ENCODE measurements at regions of chr3 and their contacts with region 1.

Region 1: GRCh38 chr3:169149349-169149890 is 514.1 kb downstream of the MECOM start:
- DNase-seq: peak; percentile 84
- H3K4me3 ChIP-seq: no peak overlapping the region
- H3K27ac ChIP-seq: peak overlapping the region in 1 of 4 donors; percentile 52
- H3K4me1 ChIP-seq: peaks cover 0 to 27% (median 25%) of the 10 kb centered on the region in 4 donors
- H3K27me3 ChIP-seq: peaks cover 25 to 63% (median 46%) of the 10 kb centered on the region in 3 donors
- CTCF ChIP-seq: peak; percentile 43 to 90 (median 80)
- EP300 ChIP-seq: no peak
- POLR2A ChIP-seq: no peak

Region 2: GRCh38 chr3:168952551-168952950 is 196.9 kb before region 1 on chr3:
- intact Hi-C with region 1: loop called (anchors 10 kb)
- DNase-seq: no peak
- H3K4me3 ChIP-seq: peak overlapping the region in 1 of 4 donors; percentile 24
- H3K27ac ChIP-seq: no peak overlapping the region
- H3K4me1 ChIP-seq: peaks cover 0 to 22% (median 7%) of the 10 kb centered on the region in 4 donors
- H3K27me3 ChIP-seq: no peaks in the 10 kb centered on the region
- CTCF ChIP-seq: peak in 1 of 4 experiments; percentile 25
- EP300 ChIP-seq: no peak
- POLR2A ChIP-seq: no peak

Region 3: GRCh38 chr3:169112153-169112892 is 37.1 kb before region 1 on chr3:
- intact Hi-C with region 1: no loop called
- DNase-seq: no peak
- H3K4me3 ChIP-seq: no peak overlapping the region
- H3K27ac ChIP-seq: peak overlapping the region in 1 of 4 donors; percentile 20
- H3K4me1 ChIP-seq: no peaks in the 10 kb centered on the region
- H3K27me3 ChIP-seq: no peaks in the 10 kb centered on the region
- CTCF ChIP-seq: no peak
- EP300 ChIP-seq: no peak
- POLR2A ChIP-seq: no peak

Region 4: GRCh38 chr3:169342652-169343505 is 193.5 kb after region 1 on chr3:
- intact Hi-C with region 1: loop called (anchors 5 kb)
- DNase-seq: no peak
- H3K4me3 ChIP-seq: no peak overlapping the region
- H3K27ac ChIP-seq: no peak overlapping the region
- H3K4me1 ChIP-seq: no peaks in the 10 kb centered on the region
- H3K27me3 ChIP-seq: no peaks in the 10 kb centered on the region
- CTCF ChIP-seq: no peak
- EP300 ChIP-seq: no peak
- POLR2A ChIP-seq: no peak

Region 5: GRCh38 chr3:169662132-169662842 is 512.9 kb after region 1 on chr3:
- intact Hi-C with region 1: loop called (anchors 2 kb)
- DNase-seq: no peak
- H3K4me3 ChIP-seq: peak overlapping the region; percentile 23 to 63 (median 55)
- H3K27ac ChIP-seq: peak overlapping the region; percentile 43 to 82 (median 59)
- H3K4me1 ChIP-seq: peaks cover 0 to 38% (median 38%) of the 10 kb centered on the region in 4 donors
- H3K27me3 ChIP-seq: peaks cover 91 to 100% (median 96%) of the 10 kb centered on the region in 3 donors
- CTCF ChIP-seq: peak in 2 of 4 experiments; percentile 34 to 65
- EP300 ChIP-seq: no peak
- POLR2A ChIP-seq: no peak

Region 6: GRCh38 chr3:169668957-169669681 is 519.7 kb after region 1 on chr3:
- intact Hi-C with region 1: loop called (anchors 2 kb)
- DNase-seq: peak; percentile 70
- H3K4me3 ChIP-seq: peak overlapping the region in 3 of 4 donors; percentile 25 to 35 (median 30)
- H3K27ac ChIP-seq: peak overlapping the region in 1 of 4 donors; percentile 46
- H3K4me1 ChIP-seq: peaks cover 0 to 20% (median 17%) of the 10 kb centered on the region in 4 donors
- H3K27me3 ChIP-seq: peaks cover 47 to 98% (median 73%) of the 10 kb centered on the region in 3 donors
- CTCF ChIP-seq: peak; percentile 39 to 66 (median 53)
- EP300 ChIP-seq: no peak
- POLR2A ChIP-seq: no peak

Region 7: DNA sequence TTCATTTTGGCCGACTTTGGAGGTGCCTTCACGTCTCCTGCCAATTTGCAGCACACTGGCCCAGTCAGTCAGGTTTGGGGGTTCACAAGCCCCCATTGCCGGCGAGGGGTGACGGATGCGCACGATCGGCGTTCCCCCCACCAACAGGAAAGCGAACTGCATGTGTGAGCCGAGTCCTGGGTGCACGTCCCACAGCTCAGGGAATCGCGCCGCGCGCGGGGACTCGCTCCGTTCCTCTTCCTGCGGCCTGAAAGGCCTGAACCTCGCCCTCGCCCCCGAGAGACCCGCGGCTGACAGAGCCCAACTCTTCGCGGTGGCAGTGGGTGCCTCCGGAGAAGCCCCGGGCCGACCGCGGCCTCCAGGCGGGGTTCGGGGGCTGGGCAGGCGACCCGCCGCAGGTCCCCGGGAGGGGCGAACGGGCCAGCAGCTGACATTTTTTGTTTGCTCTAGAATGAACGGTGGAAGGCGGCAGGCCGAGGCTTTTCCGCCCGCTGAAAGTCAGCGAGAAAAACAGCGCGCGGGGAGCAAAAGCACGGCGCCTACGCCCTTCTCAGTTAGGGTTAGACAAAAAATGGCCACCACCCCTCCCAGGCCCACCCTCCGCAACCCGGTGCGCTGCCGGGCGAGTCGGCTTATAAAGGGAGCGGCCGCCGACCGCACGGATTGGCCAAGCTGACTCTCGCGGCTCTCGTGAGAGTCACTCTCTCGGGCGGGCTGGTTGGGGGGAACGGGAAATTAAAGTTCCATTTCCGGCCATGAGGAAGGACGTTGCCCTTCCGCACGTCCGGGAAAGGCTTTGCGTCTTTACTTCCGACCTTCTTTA is 615.2 kb after region 1 on chr3 and contains the start of gene TERC:
- intact Hi-C with region 1: loop called (anchors 10 kb)
- DNase-seq: peak; percentile 98
- H3K4me3 ChIP-seq: peak within 1 kb of the TSS; percentile 69 to 74 (median 72)
- H3K27ac ChIP-seq: peak within 1 kb of the TSS; percentile 93 to 95 (median 94)
- H3K4me1 ChIP-seq: peaks cover 0 to 14% (median 4%) of the 10 kb centered on the region in 4 donors
- H3K27me3 ChIP-seq: no peaks in the 10 kb centered on the region
- CTCF ChIP-seq: no peak
- EP300 ChIP-seq: peak in 1 of 4 donors; percentile 11
- POLR2A ChIP-seq: peak; percentile 99
- total RNA-seq, gene TERC: 65.3 to 220 (median 125) TPM

Region 8: DNA sequence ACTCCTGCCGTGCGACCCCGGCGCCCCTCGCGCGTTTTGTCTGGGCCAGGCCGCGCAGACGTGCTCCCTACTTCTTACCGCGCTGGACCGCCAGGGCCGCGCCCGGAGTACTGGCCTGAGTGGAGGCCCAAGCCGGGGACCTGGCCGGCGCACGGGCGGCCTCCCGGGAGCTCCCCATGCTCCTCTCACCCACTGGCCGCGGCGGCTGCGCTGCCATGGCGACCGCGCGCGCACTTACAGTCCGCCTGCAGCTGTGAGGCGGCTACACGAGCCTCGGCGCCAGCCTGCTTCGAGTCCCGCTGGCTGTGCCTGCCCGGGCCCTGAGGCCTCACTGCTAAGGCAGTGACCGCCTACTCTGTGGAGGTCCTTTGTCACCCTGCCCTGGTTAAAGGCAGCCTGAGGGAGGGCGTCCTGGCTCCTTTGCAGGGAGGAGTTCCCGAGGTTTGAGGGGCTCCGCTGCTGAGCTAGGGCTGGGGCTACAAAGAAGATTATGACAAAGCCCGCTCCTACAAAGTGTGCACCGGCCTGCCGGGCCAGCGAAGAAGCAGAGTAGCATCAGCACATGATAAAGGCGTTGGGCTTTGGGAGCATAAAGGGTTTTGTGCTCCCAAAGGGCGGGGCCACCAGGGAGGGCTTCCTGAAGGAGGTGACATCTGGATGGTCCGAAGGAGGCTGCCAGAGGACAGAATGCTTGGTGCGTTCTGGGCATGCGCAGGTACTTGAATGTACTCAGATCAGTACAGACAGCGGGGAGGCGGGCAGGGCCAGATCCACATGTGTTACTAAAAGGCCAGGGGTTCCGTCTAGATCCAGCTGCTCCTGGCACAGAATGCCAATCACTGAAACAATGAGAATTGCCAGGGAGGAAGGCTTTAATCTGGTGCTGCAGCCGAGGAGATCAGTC is 663.2 kb after region 1 on chr3 and contains the starts of genes LRRC34 and LRRIQ4:
- intact Hi-C with region 1: no loop called
- DNase-seq: peak; percentile 87
- H3K4me3 ChIP-seq: peak within 1 kb of the TSS; percentile 54 to 72 (median 58)
- H3K27ac ChIP-seq: peak within 1 kb of the TSS; percentile 73 to 82 (median 76)
- H3K4me1 ChIP-seq: peaks cover 0 to 24% (median 16%) of the 10 kb centered on the region in 4 donors
- H3K27me3 ChIP-seq: no peaks in the 10 kb centered on the region
- CTCF ChIP-seq: no peak
- EP300 ChIP-seq: no peak
- POLR2A ChIP-seq: no peak
- total RNA-seq, gene LRRC34: 1.1 to 3.9 (median 2.3) TPM
- total RNA-seq, gene LRRIQ4: not detected

Region 9: GRCh38 chr3:169966428-169966950 is 817.1 kb after region 1 on chr3 and contains the start of gene SEC62:
- intact Hi-C with region 1: loop called (anchors 5 kb)
- DNase-seq: peak; percentile 97
- H3K4me3 ChIP-seq: peak within 1 kb of the TSS; percentile 84 to 96 (median 90)
- H3K27ac ChIP-seq: peak within 1 kb of the TSS; percentile 95 to 99 (median 98)
- H3K4me1 ChIP-seq: peaks cover 0 to 48% (median 32%) of the 10 kb centered on the region in 4 donors
- H3K27me3 ChIP-seq: no peaks in the 10 kb centered on the region
- CTCF ChIP-seq: peak; percentile 10 to 53 (median 24)
- EP300 ChIP-seq: peak in 1 of 4 donors; percentile 24
- POLR2A ChIP-seq: peak; percentile 59 to 68
- total RNA-seq, gene SEC62: 77.7 to 82.6 (median 79.8) TPM

Measured in sigmoid colon (tissue), 7 donors.